Heart right ventricle (tissue), 16 donors: ENCODE measurements at regions of chr5 and their contacts with region 1.

Region 1: DNA sequence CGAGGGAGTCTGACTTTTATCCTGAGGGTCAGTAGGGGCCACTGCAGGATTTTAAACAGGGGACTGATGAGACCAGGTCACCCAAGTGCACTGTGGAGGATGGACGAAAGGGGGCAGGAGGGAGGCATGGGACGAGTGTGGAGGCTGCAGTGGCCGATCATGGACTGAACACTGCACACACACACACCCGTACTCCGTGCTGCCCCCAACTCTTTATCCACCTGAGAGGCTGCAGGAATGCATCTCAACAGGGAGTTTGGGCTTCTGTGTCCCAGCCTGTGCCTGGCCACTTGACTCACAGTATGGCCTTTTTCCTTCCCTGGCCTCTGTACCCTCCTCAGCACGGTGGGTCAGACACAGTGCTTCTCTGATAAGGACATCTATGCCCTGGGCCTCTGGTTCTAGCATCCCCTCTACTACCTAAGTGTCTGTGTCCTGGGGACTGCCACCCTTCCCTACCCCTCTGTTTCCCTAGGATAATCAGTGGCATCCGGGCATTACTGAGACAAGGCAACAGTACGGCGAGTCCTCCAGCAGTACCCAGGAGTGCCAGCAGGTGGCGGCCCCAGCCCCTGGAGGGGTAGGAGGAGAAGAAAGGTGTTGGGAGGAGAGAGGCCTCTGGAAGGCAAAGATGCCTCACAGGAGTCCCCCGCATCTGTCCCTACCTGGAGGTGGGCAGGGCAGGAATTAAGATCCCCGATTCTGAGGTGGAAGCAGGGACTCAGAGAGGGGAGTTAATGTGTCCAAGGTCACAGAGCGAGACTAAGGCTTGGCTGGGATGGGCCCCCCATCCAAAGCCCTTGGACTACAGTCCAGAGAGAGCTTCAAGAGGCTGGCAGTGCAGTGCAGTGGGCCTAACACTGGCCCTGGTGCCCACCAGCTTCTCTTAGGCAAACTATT is 5.1 kb upstream of the CDX1 start:
- DNase-seq: peak; percentile 85 to 91
- ATAC-seq: peak; percentile 24 to 66 (median 55)
- H3K4me3 ChIP-seq: no peak overlapping the region
- H3K27ac ChIP-seq: peak overlapping the region in 9 of 10 donors; percentile 73 to 92 (median 86)
- H3K4me1 ChIP-seq: peaks cover 16 to 89% (median 67%) of the 10 kb centered on the region in 9 donors
- H3K27me3 ChIP-seq: peaks cover 0 to 12% (median 4%) of the 10 kb centered on the region in 7 donors
- CTCF ChIP-seq: peak; percentile 75 to 95 (median 90)

Region 2: DNA sequence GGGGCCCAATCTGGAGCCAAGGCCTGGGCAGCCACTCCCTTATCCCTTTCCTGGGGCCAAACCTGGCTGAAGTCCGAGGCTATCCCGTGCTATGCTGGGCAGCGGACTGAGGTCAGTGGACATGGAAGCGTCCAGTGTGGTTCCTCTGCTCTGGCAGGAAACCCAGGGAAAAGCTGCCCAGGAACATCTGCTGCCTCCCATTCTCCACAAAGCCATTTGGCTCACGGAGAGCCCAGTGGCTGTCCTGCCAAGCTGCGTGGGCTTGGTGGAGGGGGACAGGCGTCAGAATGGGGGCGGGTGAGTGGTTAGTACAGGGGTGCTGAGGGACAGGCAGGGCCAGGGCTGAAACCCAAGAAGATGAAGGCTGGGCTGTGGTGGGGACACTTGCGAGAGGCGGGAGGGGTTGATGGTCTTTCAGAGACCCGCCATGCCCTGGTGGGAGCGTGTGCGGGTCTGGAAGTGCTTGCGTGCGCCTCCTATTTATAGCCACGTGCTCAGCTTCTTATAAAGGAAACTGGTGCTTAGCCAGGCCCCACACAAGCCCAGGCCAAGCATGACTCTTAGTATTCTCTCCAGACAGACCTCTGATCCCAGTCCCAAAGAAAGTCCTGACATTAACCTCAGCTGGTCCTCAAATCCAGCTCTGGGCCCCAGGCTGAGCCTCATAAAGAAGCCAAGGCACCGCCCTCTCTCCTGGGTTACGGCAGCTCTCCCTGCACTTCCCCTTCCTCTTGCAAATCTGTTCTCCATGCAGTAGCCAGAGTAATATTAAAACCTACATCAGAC is 18.9 kb after region 1 on chr5:
- intact Hi-C with region 1: loop called in 1 of 10 experiments (anchors 2 kb)
- DNase-seq: peak; percentile 73 to 75
- ATAC-seq: peak; percentile 74 to 89 (median 86)
- H3K4me3 ChIP-seq: no peak overlapping the region
- H3K27ac ChIP-seq: peak overlapping the region; percentile 61 to 88 (median 84)
- H3K4me1 ChIP-seq: peaks cover 13 to 51% (median 23%) of the 10 kb centered on the region in 9 donors
- H3K27me3 ChIP-seq: no peaks in the 10 kb centered on the region
- CTCF ChIP-seq: no peak

Region 3: GRCh38 chr5:150340614-150341255 is 179.2 kb after region 1 on chr5:
- intact Hi-C with region 1: loop called in 1 of 10 experiments (anchors 10 kb)
- DNase-seq: no peak
- ATAC-seq: no peak
- H3K4me3 ChIP-seq: no peak overlapping the region
- H3K27ac ChIP-seq: no peak overlapping the region
- H3K4me1 ChIP-seq: no peaks in the 10 kb centered on the region
- H3K27me3 ChIP-seq: no peaks in the 10 kb centered on the region
- CTCF ChIP-seq: no peak